Mammary epithelial cell (primary cell): ENCODE measurements at regions of chr5 and their contacts with region 1.

Region 1: GRCh38 chr5:78677777-78678668 is 29.5 kb upstream of the LHFPL2 start:
- DNase-seq: peak; percentile 96
- H3K4me3 ChIP-seq: no peak overlapping the region
- H3K27ac ChIP-seq: peak overlapping the region; percentile 77
- H3K4me1 ChIP-seq: peaks cover 20% of the 10 kb centered on the region
- H3K27me3 ChIP-seq: no peaks in the 10 kb centered on the region
- CTCF ChIP-seq: no peak

Region 2: GRCh38 chr5:78586251-78586650 is 91.8 kb before region 1 on chr5:
- CTCF ChIA-PET with region 1: no interaction called
- dilution Hi-C with region 1: no loop called
- in situ Hi-C with region 1: no loop called
- intact Hi-C with region 1: no loop called
- DNase-seq: peak; percentile 99
- H3K4me3 ChIP-seq: no peak overlapping the region
- H3K27ac ChIP-seq: peak overlapping the region; percentile 71
- H3K4me1 ChIP-seq: peaks cover 27% of the 10 kb centered on the region
- H3K27me3 ChIP-seq: no peaks in the 10 kb centered on the region
- CTCF ChIP-seq: no peak

Region 3: DNA sequence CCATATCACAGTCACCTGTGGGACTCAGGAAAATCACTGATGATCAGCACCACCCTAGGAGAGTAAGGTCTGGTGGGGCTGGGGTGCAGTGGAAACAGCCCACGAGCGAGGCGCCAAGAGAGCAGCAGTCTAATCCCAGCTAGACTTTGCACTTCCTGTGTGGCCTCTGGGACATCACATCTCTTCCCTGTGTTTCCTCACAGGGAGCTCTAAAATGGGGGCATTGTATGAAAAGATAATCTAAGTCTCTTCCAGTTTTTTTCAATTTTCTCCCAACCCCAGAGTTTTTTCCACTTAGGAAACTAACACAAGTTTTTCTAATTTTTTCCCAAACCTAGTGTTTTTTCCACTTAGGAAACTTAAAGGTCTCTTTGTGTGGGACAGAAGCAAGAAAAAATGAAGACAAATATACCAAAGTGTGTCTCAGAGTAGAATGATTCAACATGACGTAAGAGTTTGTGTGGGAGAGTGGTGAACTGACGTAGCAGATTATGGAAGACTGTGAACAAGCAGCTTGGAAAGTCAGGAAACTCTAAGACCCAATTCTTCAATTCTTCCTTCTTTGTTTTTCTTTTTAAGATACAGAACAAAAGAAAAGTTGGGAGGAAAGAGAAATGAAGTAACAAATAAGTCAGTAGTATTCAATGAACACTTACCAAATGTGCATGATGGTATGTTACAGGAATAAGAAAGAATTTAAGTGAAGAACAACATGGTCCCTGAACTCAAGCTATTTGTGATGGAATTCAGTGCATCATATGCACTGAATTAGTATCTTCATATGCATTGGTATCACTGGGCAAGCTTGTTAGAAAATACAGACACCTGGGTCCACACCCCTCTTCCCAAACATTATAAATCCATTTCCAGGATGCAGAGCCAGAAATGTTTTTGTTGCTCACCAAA is 80.7 kb before region 1 on chr5:
- CTCF ChIA-PET with region 1: no interaction called
- dilution Hi-C with region 1: no loop called
- in situ Hi-C with region 1: no loop called
- intact Hi-C with region 1: no loop called
- DNase-seq: peak; percentile 82
- H3K4me3 ChIP-seq: no peak overlapping the region
- H3K27ac ChIP-seq: peak overlapping the region; percentile 62
- H3K4me1 ChIP-seq: peaks cover 55% of the 10 kb centered on the region
- H3K27me3 ChIP-seq: no peaks in the 10 kb centered on the region
- CTCF ChIP-seq: no peak

Region 4: DNA sequence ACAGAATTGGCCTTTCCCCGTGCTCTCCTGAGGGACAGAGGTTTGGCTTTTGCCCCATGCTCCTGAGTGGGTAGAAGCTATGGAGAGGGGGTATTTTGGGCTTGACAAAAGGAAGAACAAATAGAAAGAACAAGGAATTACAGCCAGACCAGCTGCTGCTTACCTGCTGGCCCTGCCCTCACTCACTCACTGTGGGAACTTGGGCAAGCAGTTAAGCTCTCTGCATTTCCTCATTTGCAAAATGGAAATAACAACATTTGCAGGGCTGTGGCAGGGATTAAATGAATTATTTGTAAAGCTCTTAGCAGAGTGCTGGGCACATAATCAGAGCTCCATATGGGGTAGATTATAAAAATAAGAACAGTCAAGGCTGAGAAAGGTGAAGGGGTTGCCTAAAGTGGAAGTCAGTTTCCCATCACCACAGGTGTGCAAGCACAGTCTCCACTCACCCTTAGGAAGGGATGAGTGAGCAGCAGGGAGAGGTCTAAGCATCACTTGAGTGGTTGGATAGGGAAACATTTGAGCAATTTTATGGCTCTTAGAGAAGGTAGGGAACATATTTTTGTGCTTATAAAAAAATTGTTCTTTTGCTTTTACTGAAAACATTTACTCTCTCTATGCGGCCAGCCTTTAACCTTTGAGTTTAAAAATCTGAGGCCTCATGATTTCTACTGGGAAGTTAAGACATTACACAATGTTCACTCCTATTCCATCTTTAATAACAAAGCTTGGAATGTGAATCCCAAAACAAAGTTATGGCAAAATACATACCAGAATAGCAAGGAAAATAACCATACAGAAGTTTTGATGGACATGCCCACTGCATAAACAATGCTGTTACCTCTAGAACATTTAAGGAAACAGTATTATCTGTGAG is 13.3 kb after region 1 on chr5:
- CTCF ChIA-PET with region 1: no interaction called
- dilution Hi-C with region 1: no loop called
- in situ Hi-C with region 1: no loop called
- intact Hi-C with region 1: no loop called
- DNase-seq: no peak
- H3K4me3 ChIP-seq: no peak overlapping the region
- H3K27ac ChIP-seq: no peak overlapping the region
- H3K4me1 ChIP-seq: no peaks in the 10 kb centered on the region
- H3K27me3 ChIP-seq: no peaks in the 10 kb centered on the region
- CTCF ChIP-seq: no peak

Region 5: DNA sequence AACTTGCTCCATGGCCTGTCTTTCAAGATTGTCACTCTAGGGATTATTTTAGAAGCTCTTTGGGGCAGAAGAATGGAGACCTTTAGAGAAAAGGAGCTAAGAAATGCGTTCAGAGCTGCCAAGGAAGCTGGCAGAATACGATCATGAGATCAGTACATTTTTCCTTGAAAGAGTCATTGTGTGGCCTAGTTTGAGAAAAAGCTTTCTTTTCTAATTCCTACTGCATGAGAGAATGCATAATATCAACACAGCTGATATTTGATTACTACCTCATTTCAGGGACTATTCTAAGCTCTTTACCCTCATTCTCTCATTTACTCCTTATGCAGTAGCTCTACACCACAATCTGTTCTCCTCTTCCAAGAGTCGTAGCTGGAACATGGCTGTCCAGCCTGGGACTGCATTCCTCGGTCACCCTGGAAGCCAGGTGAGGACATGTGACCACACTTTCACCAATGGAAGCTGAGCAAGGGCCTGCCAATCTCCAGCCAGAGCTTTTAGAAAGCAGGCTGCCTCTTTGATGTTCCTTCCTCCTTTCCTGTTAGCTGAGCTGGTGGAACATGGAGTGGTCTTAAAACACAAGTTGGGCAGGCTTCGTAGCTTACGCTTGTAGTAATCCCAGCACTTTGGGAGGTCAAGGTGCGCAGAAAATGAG is 69.8 kb after region 1 on chr5:
- CTCF ChIA-PET with region 1: no interaction called
- dilution Hi-C with region 1: loop called (anchors 5 kb)
- in situ Hi-C with region 1: no loop called
- intact Hi-C with region 1: no loop called
- DNase-seq: no peak
- H3K4me3 ChIP-seq: no peak overlapping the region
- H3K27ac ChIP-seq: no peak overlapping the region
- H3K4me1 ChIP-seq: no peaks in the 10 kb centered on the region
- H3K27me3 ChIP-seq: no peaks in the 10 kb centered on the region
- CTCF ChIP-seq: no peak

Region 6: DNA sequence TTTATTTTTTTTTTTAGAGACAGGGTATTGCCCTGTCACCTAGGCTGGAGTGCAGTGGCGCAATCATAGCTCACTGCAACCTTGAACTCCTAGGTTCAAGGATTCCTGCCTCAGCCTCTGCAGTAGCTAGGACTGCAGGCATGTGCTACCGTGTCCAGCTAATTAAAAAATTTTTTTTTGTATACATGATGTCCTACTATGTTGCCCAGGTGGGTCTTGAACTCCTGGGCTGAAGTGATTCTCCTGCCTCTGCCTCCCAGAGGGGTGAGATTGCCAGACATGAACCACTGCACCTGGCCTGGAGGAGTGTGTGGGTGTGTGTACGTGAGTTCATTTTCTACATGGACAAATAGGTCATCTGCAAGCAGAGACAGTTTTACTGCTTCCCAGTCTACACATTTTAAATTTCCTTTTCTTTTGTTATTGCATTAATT is 591.7 kb after region 1 on chr5:
- CTCF ChIA-PET with region 1: no interaction called
- dilution Hi-C with region 1: no loop called
- in situ Hi-C with region 1: no loop called
- intact Hi-C with region 1: no loop called
- DNase-seq: no peak
- H3K4me3 ChIP-seq: no peak overlapping the region
- H3K27ac ChIP-seq: no peak overlapping the region
- H3K4me1 ChIP-seq: no peaks in the 10 kb centered on the region
- H3K27me3 ChIP-seq: no peaks in the 10 kb centered on the region
- CTCF ChIP-seq: no peak